ENCODE measurements at regions of chr2 and their contacts with region 1.

Region 1: DNA sequence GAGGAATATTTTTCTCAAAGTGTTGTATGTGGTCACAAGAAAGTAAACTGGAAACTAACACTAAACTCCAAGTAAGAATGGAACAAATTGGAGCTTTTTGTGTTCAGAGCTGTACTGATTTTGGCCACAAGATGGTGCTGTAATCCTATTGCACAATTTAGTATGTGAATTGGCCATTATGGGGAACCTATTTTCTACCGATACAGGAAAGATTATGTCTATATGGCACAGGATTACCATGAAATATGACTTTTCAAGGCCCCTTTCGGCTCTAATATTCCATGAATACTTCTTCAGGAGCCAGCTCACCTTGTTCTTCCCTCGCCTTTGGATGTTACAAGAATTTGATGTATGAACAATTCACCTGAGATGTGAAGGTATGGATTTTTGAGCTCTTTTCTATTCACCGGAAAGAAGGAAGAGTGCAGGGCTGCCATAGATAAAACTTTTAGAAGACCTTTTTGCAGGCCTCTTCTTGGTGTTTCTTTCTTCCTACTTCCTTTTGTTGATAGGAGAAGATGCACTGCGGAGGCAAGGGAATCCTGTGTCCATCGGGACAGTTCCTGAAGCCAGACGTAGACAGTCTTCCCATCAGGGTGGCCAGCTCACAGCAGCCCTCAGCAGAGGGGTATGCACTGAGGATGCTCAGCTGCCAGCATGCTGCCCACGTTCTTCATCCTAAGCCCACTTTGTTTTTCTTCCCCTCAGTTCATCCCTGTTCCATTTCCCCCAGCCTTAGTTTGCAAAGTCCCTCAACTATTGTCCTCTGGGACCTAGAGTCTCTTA is 13.3 kb downstream of the MRPL44 start:
- DNase-seq: peak in 1 of 2 experiments; percentile 74
- H3K4me3 ChIP-seq: no peak overlapping the region
- H3K27ac ChIP-seq: no peak overlapping the region
- H3K4me1 ChIP-seq: no peaks in the 10 kb centered on the region
- H3K27me3 ChIP-seq: no peaks in the 10 kb centered on the region
- CTCF ChIP-seq: peak in 2 of 3 experiments; percentile 61 to 83; a peak in 3 of 4 replicates
- EP300 ChIP-seq: no peak
- POLR2A ChIP-seq: no peak
- RAD21 ChIP-seq: peak; percentile 91 to 92

Region 2: GRCh38 chr2:224008702-224009261 is 38.2 kb after region 1 on chr2:
- CTCF ChIA-PET with region 1: interaction called, 12 read pairs
- POLR2A ChIA-PET with region 1: no interaction called
- DNase-seq: peak in 1 of 2 experiments; percentile 67
- H3K4me3 ChIP-seq: no peak overlapping the region; a peak in 1 of 8 replicates
- H3K27ac ChIP-seq: no peak overlapping the region
- H3K4me1 ChIP-seq: peaks cover 0 to 12% (median 5%) of the 10 kb centered on the region in 4 experiments; a peak in 6 of 7 replicates
- H3K27me3 ChIP-seq: no peaks in the 10 kb centered on the region
- CTCF ChIP-seq: no peak
- EP300 ChIP-seq: no peak
- POLR2A ChIP-seq: no peak
- RAD21 ChIP-seq: no peak

Region 3: DNA sequence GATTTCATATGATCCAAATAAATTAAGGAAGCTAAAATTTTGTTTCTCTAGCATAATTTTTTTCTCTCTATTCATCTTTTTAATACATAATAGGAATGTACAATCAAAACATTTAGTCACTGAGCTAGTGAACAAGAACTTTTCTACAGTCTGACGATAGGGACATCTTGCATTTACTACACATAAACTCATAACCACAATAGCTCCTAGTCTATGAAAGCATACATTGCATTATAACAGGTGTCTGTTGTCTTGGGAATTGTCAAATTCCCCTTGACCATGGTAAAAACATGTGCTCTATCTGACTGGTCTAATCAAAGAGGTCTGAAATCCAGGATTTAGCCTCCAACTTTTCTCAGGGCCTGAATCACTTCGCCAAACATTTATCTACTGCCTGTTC is 286.6 kb after region 1 on chr2:
- CTCF ChIA-PET with region 1: interaction called, 10 read pairs
- POLR2A ChIA-PET with region 1: no interaction called
- DNase-seq: no peak
- H3K4me3 ChIP-seq: no peak overlapping the region
- H3K27ac ChIP-seq: no peak overlapping the region
- H3K4me1 ChIP-seq: no peaks in the 10 kb centered on the region
- H3K27me3 ChIP-seq: no peaks in the 10 kb centered on the region
- CTCF ChIP-seq: no peak
- EP300 ChIP-seq: no peak
- POLR2A ChIP-seq: no peak
- RAD21 ChIP-seq: no peak

Region 4: DNA sequence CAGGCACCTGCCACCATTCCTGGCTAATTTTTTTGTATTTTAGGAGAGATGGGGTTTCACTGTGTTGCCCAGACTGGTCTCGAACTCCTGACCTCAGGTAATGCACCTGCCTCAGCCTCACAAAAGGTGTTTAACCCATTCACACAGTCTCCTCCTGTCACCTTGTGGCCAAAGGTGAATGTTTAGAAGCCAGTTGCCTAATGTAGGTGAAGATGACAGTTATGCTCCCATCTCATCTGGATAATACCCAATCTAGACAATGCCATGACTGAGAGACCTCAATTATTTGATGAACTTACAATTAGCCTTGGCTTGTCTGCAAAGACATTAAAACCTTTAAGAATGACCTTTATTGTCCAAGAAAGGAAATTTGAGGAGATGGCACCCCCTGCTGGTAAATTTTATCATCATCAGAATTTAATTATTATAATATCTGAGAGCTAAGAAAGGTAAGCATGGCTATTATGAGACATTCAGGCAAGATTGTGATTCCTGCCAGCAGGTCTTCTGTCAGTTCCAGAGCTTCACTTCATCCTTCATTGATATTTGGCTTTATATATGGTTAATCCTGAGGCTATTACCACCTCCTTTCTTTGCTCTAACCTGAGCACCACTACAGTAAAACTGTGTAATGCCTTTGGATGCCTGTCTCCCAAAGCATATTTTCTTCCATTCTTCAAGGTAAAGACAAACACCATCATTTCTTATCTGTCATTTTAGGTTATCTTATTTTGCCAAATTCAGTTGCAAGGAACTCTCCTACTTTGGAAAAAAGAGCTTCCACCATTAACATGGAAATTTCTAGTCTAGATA is 313.8 kb after region 1 on chr2:
- CTCF ChIA-PET with region 1: interaction called, 265 read pairs
- POLR2A ChIA-PET with region 1: interaction called, 6 read pairs
- DNase-seq: no peak
- H3K4me3 ChIP-seq: no peak overlapping the region
- H3K27ac ChIP-seq: no peak overlapping the region
- H3K4me1 ChIP-seq: no peaks in the 10 kb centered on the region
- H3K27me3 ChIP-seq: peaks cover 0 to 1% (median 0%) of the 10 kb centered on the region in 4 experiments; a peak in 1 of 7 replicates
- CTCF ChIP-seq: peak in 2 of 3 experiments; percentile 75 to 76; a peak in 3 of 4 replicates
- EP300 ChIP-seq: no peak
- POLR2A ChIP-seq: no peak
- RAD21 ChIP-seq: peak; percentile 74 to 79

Region 5: DNA sequence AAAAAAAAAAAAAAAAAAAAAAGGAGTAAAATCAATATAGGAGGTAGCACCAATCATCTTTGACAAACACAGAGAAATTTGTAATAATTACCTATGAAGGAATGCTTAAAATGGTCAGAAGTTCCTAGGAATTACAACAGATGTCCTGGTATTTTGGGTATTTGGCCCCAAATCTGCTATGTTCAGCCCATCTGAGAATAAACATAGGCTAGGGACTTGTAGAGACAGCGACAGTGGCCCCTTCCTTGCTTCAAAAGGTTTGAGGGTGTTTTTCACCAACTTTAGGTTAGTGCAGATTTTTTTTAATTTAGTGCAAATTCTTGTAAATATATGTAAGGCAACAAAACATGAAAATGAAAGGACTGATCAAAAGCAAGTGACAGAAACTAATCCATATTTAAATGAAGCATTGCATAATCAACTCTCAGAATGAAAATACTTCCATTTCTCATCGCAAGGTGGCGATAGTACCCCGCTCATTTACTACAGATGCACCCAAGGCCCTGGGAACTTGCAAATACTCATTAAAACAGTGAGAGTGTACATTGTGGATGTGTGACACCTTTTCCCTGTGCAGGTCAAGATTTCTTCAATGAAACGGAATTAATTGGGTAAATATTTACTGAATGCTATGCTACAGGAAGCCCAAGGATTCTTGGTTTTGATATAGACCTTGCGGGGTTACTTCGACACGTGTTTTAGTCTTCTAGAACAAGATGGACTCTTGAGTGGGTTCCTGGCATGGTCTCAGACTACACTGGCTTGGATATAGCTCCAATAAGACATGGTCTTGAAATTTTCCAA is 386.8 kb after region 1 on chr2:
- CTCF ChIA-PET with region 1: interaction called, 23 read pairs
- POLR2A ChIA-PET with region 1: no interaction called
- DNase-seq: peak in 1 of 2 experiments; percentile 76
- H3K4me3 ChIP-seq: no peak overlapping the region
- H3K27ac ChIP-seq: no peak overlapping the region
- H3K4me1 ChIP-seq: no peaks in the 10 kb centered on the region
- H3K27me3 ChIP-seq: no peaks in the 10 kb centered on the region
- CTCF ChIP-seq: peak in 2 of 3 experiments; percentile 74 to 78; a peak in 3 of 4 replicates
- EP300 ChIP-seq: no peak
- POLR2A ChIP-seq: no peak
- RAD21 ChIP-seq: peak; percentile 89 to 91

Measured in H1 (cell line).